ENCODE measurements at regions of chr7 and their contacts with region 1.

Region 1: DNA sequence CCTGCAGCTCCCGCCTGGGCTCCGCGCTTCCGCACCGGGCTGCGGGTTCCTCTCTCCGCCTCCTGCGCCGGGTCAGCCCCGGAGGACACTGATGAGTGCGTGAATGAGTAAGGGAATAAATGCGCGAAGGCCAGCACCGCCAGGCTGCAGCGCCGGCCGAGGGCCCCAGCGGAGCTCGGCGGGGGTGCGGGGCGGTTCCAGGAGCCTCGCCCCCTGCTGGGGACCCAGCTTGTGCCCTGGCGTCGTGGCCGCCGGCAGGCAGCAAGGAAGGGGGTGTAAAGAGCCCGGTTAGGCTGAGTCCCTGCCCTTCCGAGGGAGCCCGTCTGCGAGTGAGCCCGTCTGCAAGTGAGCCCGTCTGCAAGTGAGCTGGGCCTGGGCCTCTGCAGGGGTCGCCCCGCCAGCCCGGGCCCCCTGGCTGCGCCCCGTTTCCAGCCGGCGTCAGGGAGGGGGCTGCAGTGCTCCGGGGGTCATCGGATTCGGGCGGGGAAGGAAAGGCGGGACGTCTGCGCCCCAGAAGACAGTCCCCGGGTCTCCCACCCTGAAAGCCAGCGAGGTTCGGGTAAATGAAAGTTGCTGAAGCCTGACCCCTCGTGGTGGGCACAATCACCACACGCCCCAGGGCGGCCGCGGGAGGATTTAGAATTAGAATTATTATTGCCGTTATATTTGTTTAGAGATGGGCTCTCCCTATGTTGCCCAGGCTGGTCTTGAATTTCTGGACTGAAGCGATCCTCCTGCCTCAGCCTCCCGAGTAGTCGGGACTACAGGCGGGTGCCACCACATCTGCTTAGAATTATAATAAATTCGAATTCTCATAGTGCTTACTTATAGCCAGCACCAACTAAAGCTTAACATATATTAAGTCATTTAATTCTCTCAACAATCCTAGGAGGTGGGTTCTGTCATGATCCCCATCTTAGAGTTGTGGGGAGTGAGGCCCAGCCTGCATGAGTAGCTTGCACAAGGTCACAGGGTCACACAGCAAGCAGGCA is 8.6 kb upstream of the CRYGN start:
- DNase-seq: peak; percentile 64
- H3K4me3 Mint-ChIP-seq: peak overlapping the region; percentile 43
- H3K27ac Mint-ChIP-seq: no peak overlapping the region
- H3K4me1 Mint-ChIP-seq: no peaks in the 10 kb centered on the region
- H3K27me3 Mint-ChIP-seq: no peaks in the 10 kb centered on the region
- CTCF ChIP-seq: peak; percentile 69

Region 2: GRCh38 chr7:151351027-151351426 is 97.5 kb before region 1 on chr7:
- CTCF ChIA-PET with region 1: interaction called, 18 read pairs
- POLR2A ChIA-PET with region 1: no interaction called
- intact Hi-C with region 1: no loop called
- DNase-seq: no peak
- H3K4me3 Mint-ChIP-seq: no peak overlapping the region
- H3K27ac Mint-ChIP-seq: no peak overlapping the region
- H3K4me1 Mint-ChIP-seq: peaks cover 8% of the 10 kb centered on the region
- H3K27me3 Mint-ChIP-seq: no peaks in the 10 kb centered on the region
- CTCF ChIP-seq: peak; percentile 19

Region 3: GRCh38 chr7:151368136-151368571 is 80.4 kb before region 1 on chr7:
- CTCF ChIA-PET with region 1: interaction called, 222 read pairs
- POLR2A ChIA-PET with region 1: interaction called, 5 read pairs
- intact Hi-C with region 1: loop called (anchors 1 kb)
- DNase-seq: peak; percentile 81
- H3K4me3 Mint-ChIP-seq: no peak overlapping the region
- H3K27ac Mint-ChIP-seq: no peak overlapping the region
- H3K4me1 Mint-ChIP-seq: no peaks in the 10 kb centered on the region
- H3K27me3 Mint-ChIP-seq: no peaks in the 10 kb centered on the region
- CTCF ChIP-seq: peak; percentile 95

Region 4: GRCh38 chr7:151459726-151460473 is 11.3 kb after region 1 on chr7:
- CTCF ChIA-PET with region 1: interaction called, 11 read pairs
- POLR2A ChIA-PET with region 1: interaction called, 3 read pairs
- intact Hi-C with region 1: no loop called
- DNase-seq: peak; percentile 85
- H3K4me3 Mint-ChIP-seq: peak overlapping the region; percentile 65
- H3K27ac Mint-ChIP-seq: peak overlapping the region; percentile 76
- H3K4me1 Mint-ChIP-seq: peaks cover 16% of the 10 kb centered on the region
- H3K27me3 Mint-ChIP-seq: no peaks in the 10 kb centered on the region
- CTCF ChIP-seq: peak; percentile 24

Region 5: GRCh38 chr7:151759591-151760042 is 311.1 kb after region 1 on chr7:
- CTCF ChIA-PET with region 1: interaction called, 13 read pairs
- POLR2A ChIA-PET with region 1: no interaction called
- intact Hi-C with region 1: no loop called
- DNase-seq: peak; percentile 78
- H3K4me3 Mint-ChIP-seq: no peak overlapping the region
- H3K27ac Mint-ChIP-seq: no peak overlapping the region
- H3K4me1 Mint-ChIP-seq: peaks cover 21% of the 10 kb centered on the region
- H3K27me3 Mint-ChIP-seq: no peaks in the 10 kb centered on the region
- CTCF ChIP-seq: peak; percentile 83

Measured in MCF 10A (cell line).